Thyroid gland (tissue), 4 donors: ENCODE measurements at regions of chr2 and their contacts with region 1.

Region 1: GRCh38 chr2:219278655-219279516 is at the start of gene DNAJB2:
- DNase-seq: peak; percentile 99
- H3K4me3 ChIP-seq: peak within 1 kb of the TSS; percentile 47 to 89 (median 74)
- H3K27ac ChIP-seq: peak within 1 kb of the TSS; percentile 99
- H3K4me1 ChIP-seq: peaks cover 18 to 32% of the 10 kb centered on the region in 2 donors
- H3K27me3 ChIP-seq: no peaks in the 10 kb centered on the region
- CTCF ChIP-seq: peak in 1 of 6 experiments; percentile 4
- POLR2A ChIP-seq: peak in 1 of 2 donors; percentile 97
- total RNA-seq, gene DNAJB2: 79.0 to 127 (median 116) TPM

Region 2: GRCh38 chr2:218959141-218959731 is 319.6 kb before region 1 on chr2 and contains the start of gene CDK5R2:
- intact Hi-C with region 1: no loop called
- DNase-seq: peak; percentile 48 to 52
- H3K4me3 ChIP-seq: peak within 1 kb of the TSS in 1 of 3 donors; percentile 26
- H3K27ac ChIP-seq: no peak within 1 kb of the TSS
- H3K4me1 ChIP-seq: peaks cover 0 to 22% of the 10 kb centered on the region in 2 donors
- H3K27me3 ChIP-seq: peaks cover 43% of the 10 kb centered on the region
- CTCF ChIP-seq: no peak
- POLR2A ChIP-seq: no peak
- total RNA-seq, gene CDK5R2: 0.39 TPM in 1 of 4 donors, not detected in the others

Region 3: DNA sequence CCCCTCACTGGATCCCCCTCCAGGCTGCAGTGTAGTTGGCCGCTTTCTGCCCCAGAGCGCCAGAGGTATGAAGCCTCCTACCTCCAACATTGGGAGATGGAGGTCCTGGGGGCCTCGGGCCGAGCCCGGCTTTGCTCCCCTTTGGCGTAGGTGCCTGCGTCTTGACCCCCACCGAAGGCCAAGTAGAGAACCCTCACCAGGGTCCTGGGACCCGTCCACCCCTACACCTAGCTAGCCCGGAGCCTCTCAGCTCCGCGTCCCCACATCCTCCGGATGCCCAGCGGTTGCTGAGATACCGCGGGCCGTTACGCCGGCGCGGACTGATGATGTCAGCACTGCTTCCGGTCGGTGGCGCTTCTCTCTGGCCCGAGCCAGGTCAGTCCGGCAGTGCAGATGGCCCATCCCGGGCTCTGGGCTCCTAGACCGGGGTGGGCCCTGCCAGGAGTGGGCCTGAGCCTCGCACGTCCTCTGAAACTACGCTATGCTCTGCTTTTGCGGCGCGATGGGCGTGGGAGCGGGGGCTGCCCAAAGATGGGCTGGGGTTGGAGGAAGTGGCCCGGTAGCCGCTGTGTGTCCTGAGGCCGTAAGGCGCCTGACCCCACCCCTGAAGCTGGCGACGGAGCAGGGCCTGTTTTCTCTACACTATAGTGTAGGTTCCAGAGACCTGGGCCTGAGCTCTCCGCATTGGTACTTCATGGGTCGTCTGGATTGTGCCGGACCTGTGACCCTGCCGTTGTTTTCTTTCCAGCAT is 33.6 kb before region 1 on chr2 and contains the starts of genes GLB1L and STK16:
- intact Hi-C with region 1: loop called (anchors 5 kb)
- DNase-seq: peak; percentile 93 to 94
- H3K4me3 ChIP-seq: peak within 1 kb of the TSS; percentile 21 to 83 (median 72)
- H3K27ac ChIP-seq: peak within 1 kb of the TSS; percentile 35 to 89 (median 86)
- H3K4me1 ChIP-seq: peaks cover 22 to 49% of the 10 kb centered on the region in 2 donors
- H3K27me3 ChIP-seq: no peaks in the 10 kb centered on the region
- CTCF ChIP-seq: peak in 1 of 6 experiments; percentile 7
- POLR2A ChIP-seq: peak in 1 of 2 donors; percentile 88
- total RNA-seq, gene GLB1L: 12.9 to 24.6 (median 14.9) TPM
- total RNA-seq, gene STK16: 19.5 to 33.0 (median 24.9) TPM

Region 4: DNA sequence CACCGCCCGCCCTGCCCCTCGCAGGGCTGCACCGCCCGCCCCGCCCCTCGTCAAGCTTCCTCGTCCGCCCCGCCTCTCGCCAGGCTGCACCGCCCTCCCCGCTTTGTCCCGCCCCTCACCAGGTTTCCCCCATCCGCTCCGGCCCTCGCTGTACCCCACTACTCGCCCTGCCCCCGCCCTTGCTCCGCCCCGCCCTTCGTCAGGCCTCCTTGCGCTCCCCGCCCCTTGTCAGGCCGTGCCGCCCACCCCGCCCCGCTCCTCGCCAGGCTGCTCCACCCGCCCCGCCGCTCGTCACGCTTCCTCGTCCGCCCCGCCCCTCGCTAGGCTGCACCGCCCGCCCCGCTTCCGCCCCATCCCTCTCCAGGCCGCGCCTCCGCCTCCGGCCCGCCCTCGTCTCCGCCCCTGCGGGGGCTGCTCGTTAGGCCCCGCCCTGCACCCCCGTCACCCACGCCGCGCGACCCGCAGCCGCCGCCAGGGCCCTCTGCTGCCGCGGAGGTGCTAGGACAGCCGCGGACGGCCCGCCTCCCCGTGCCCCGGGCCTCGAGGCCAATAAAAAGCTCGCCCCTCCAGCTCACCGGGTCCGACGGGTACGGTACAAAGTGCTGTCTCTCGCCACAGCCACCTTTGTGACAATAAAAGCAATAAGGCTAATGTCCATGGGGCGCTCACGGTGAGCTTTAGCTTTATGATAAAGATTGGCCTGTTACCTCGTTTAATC is 109.4 kb after region 1 on chr2:
- intact Hi-C with region 1: no loop called
- DNase-seq: peak; percentile 99
- H3K4me3 ChIP-seq: peak overlapping the region in 1 of 3 donors; percentile 79
- H3K27ac ChIP-seq: peak overlapping the region; percentile 49 to 81 (median 51)
- H3K4me1 ChIP-seq: peaks cover 8 to 13% of the 10 kb centered on the region in 2 donors
- H3K27me3 ChIP-seq: no peaks in the 10 kb centered on the region
- CTCF ChIP-seq: peak; percentile 40 to 93 (median 64)
- POLR2A ChIP-seq: peak in 1 of 2 donors; percentile 34